ENCODE measurements at regions of chr11 and their contacts with region 1.

Region 1: GRCh38 chr11:9613118-9613829 is 39.8 kb downstream of the WEE1 start:
- DNase-seq: peak; percentile 80 to 94 (median 91)
- H3K4me3 ChIP-seq: peak overlapping the region; percentile 41 to 81 (median 64)
- H3K27ac ChIP-seq: peak overlapping the region; percentile 85 to 99 (median 96)
- H3K27me3 ChIP-seq: no peaks in the 10 kb centered on the region
- CTCF ChIP-seq: peak; percentile 73 to 99 (median 93)

Region 2: DNA sequence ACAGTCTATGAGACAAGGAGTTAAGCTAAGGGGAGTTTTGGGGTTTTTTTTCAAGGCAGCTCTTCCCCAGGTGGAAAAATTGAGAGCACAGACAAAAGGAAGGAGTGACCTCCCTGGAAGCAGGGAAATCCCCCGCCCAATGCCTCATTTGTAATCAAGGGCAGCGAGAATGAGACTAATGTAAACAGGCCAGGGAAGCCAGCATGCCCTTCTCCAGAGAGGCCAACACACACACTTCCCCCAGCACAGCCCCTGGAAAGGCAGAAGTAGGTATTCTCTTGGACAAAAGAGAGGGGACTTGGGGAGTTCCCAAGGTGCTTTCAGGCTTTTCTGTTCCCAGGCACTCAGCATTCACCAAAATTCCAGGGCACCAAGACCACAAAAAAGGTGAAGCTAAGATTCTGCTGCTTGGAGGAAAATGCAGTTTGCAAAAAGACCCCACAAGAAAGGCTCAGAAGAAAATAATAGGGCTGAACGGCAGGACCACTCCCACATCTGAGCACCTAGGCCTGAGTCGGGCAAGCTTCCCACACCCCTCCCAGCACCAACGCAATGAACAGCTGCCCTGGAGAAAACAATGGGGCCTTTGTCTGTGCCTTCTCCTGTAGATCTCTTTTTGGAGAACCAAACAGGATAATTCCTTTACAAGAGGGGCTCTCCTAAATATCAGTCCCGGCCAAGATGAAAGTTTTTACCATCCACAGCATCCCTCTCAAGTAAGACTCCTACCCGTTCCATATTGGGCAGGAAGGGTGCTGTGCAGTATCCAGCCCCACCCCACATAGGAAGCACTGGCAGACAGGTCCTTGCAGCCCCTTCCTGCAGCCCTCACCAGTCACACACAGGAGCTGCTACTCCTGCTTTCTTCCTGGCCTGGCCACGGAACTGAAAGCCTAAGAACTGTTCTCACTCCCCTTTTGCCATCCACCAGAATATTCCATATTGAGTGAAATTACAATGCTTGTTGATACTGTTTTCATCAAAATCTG is 773.0 kb before region 1 on chr11:
- intact Hi-C with region 1: no loop called
- DNase-seq: peak in 4 of 10 donors; percentile 40 to 64 (median 50)
- H3K4me3 ChIP-seq: peak overlapping the region in 4 of 59 donors; percentile 0 to 28 (median 16)
- H3K27ac ChIP-seq: peak overlapping the region in 9 of 59 donors; percentile 8 to 59 (median 38)
- H3K27me3 ChIP-seq: no peaks in the 10 kb centered on the region
- CTCF ChIP-seq: no peak

Region 3: DNA sequence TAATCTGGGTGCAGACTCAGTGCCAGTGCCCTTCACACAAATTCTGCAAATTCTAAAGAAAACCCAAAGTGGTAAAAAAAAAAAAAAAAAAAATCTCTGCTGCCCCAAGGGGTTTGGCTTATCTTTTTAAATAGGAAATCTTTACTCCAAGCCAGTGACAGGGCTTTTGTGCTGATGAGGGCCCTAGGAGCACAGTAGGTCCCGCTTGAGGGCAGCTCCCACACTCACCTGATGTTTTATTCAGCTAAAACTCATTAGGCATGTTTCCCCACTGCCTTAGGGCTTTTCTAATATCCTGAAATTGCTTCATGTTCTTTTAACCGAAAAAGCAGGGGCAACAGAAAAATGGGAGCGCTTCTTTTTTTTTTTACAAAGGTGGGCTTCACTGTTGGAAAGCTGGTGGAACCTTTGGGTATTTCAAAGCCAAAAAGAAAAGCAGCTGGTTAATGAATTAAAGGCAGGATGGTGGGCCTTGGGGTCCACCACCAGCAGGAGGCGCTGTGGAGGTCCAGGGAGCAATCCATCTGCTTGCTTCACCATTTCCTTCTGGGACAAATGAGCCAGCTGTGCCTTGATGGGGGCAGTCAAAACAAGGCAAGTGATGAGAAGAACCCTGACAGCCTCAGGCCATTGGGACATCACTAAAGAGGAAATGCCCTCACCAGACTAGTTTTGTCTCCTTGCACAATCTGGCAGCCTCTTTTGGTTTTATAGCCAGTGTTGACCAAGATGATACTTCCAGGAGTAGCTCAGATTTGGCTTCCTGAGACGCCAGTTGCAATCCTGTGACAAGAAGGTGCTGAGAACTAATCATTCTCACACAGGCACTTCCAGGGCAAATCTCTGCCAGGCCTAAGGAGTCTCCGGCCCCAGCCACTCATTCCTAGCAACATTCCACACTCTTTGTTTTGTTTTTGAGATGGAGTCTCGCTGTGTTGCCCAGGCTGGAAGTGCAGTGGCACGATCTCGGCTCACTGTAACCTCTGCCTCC is 78.2 kb before region 1 on chr11:
- intact Hi-C with region 1: loop called in 1 of 2 experiments (anchors 5 kb)
- DNase-seq: peak in 8 of 10 donors; percentile 14 to 63 (median 44)
- H3K4me3 ChIP-seq: no peak overlapping the region
- H3K27ac ChIP-seq: peak overlapping the region in 1 of 59 donors; percentile 23
- H3K27me3 ChIP-seq: no peaks in the 10 kb centered on the region
- CTCF ChIP-seq: peak; percentile 43 to 74 (median 63)

Region 4: GRCh38 chr11:9663699-9664275 is 50.5 kb after region 1 on chr11 and contains the start of gene SWAP70:
- intact Hi-C with region 1: loop called in 1 of 2 experiments (anchors 2 kb)
- DNase-seq: peak; percentile 56 to 91 (median 74)
- H3K4me3 ChIP-seq: peak within 1 kb of the TSS; percentile 56 to 95 (median 88)
- H3K27ac ChIP-seq: peak within 1 kb of the TSS; percentile 44 to 95 (median 88)
- H3K27me3 ChIP-seq: peaks cover 0 to 6% (median 0%) of the 10 kb centered on the region in 45 donors
- CTCF ChIP-seq: peak in 47 of 56 donors; percentile 17 to 61 (median 37)
- total RNA-seq, gene SWAP70: 17.4 to 65.0 (median 26.7) TPM

Region 5: GRCh38 chr11:9748361-9748970 is 135.2 kb after region 1 on chr11:
- intact Hi-C with region 1: loop called (anchors 1 kb)
- DNase-seq: peak in 8 of 10 donors; percentile 38 to 74 (median 58)
- H3K4me3 ChIP-seq: peak overlapping the region in 1 of 59 donors; percentile 7
- H3K27ac ChIP-seq: peak overlapping the region in 27 of 59 donors; percentile 1 to 62 (median 33)
- H3K27me3 ChIP-seq: no peaks in the 10 kb centered on the region
- CTCF ChIP-seq: peak; percentile 20 to 88 (median 76)

Measured in dorsolateral prefrontal cortex (tissue), 120 donors.